Mammary epithelial cell (primary cell): ENCODE measurements at regions of chr14 and their contacts with region 1.

Region 1: GRCh38 chr14:86885280-86885679 is 1107.7 kb downstream of the GALC start:
- DNase-seq: no peak
- H3K4me3 ChIP-seq: no peak overlapping the region
- H3K27ac ChIP-seq: no peak overlapping the region
- H3K4me1 ChIP-seq: no peaks in the 10 kb centered on the region
- H3K27me3 ChIP-seq: no peaks in the 10 kb centered on the region
- CTCF ChIP-seq: no peak

Region 2: GRCh38 chr14:86955771-86956354 is 70.6 kb after region 1 on chr14:
- CTCF ChIA-PET with region 1: no interaction called
- dilution Hi-C with region 1: no loop called
- in situ Hi-C with region 1: no loop called
- intact Hi-C with region 1: no loop called
- DNase-seq: no peak
- H3K4me3 ChIP-seq: no peak overlapping the region
- H3K27ac ChIP-seq: no peak overlapping the region
- H3K4me1 ChIP-seq: no peaks in the 10 kb centered on the region
- H3K27me3 ChIP-seq: no peaks in the 10 kb centered on the region
- CTCF ChIP-seq: no peak

Region 3: GRCh38 chr14:86973177-86973576 is 87.9 kb after region 1 on chr14:
- CTCF ChIA-PET with region 1: no interaction called
- dilution Hi-C with region 1: loop called (anchors 5 kb)
- in situ Hi-C with region 1: no loop called
- intact Hi-C with region 1: no loop called
- DNase-seq: no peak
- H3K4me3 ChIP-seq: no peak overlapping the region
- H3K27ac ChIP-seq: no peak overlapping the region
- H3K4me1 ChIP-seq: no peaks in the 10 kb centered on the region
- H3K27me3 ChIP-seq: no peaks in the 10 kb centered on the region
- CTCF ChIP-seq: no peak